HepG2 (cell line): ENCODE measurements at regions of chr19 and their contacts with region 1.

Region 1: GRCh38 chr19:41959056-41960053 is at the start of gene RABAC1:
- DNase-seq: peak; percentile 83
- ATAC-seq: peak; percentile 88
- H3K4me3 ChIP-seq: peak within 1 kb of the TSS; percentile 95 to 99 (median 98)
- H3K27ac ChIP-seq: peak within 1 kb of the TSS; percentile 73
- H3K4me1 ChIP-seq: peaks cover 32% of the 10 kb centered on the region
- H3K27me3 ChIP-seq: no peaks in the 10 kb centered on the region; a peak in 1 of 5 replicates
- CTCF ChIP-seq: peak; percentile 42
- EP300 ChIP-seq: 0 out of 4 replicates have a peak, but pooled peaks of 1 of the 2 experiments have one; percentile 36
- POLR2A ChIP-seq: peak; percentile 13 to 59; a peak in 3 of 4 replicates
- RAD21 ChIP-seq: no peak
- total RNA-seq, gene RABAC1: 20.7 and 37.4 TPM in 2 replicates

Region 2: DNA sequence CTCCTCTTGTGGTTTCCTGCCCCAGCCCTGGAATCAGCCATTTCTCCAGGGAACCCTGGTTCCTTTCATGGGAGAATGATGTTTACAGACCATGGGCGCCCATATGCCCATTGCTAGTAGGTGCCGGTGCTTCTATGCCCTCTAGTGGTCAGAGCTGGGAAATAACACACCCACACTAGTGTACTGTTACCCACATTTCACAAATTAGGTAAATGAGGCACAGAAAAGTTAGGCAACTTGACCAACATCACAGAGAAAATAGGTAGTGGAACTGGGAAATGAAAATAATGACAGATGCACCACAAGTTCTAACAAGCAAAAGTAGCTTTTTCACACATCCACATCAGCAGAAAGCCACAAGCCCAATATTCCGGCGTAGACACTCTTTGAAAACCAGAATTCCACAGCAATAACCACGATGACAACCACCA is 164.3 kb before region 1 on chr19:
- CTCF ChIA-PET with region 1: interaction called, 5 read pairs
- POLR2A ChIA-PET with region 1: no interaction called
- in situ Hi-C with region 1: no loop called
- intact Hi-C with region 1: loop called (anchors 10 kb)
- DNase-seq: peak; percentile 29
- ATAC-seq: peak; percentile 85
- H3K4me3 ChIP-seq: no peak overlapping the region
- H3K27ac ChIP-seq: no peak overlapping the region
- H3K4me1 ChIP-seq: peaks cover 10% of the 10 kb centered on the region
- H3K27me3 ChIP-seq: peaks cover 0 to 12% of the 10 kb centered on the region in 2 experiments; a peak in 2 of 5 replicates
- CTCF ChIP-seq: peak; percentile 60
- EP300 ChIP-seq: no peak
- POLR2A ChIP-seq: no peak
- RAD21 ChIP-seq: no peak

Region 3: DNA sequence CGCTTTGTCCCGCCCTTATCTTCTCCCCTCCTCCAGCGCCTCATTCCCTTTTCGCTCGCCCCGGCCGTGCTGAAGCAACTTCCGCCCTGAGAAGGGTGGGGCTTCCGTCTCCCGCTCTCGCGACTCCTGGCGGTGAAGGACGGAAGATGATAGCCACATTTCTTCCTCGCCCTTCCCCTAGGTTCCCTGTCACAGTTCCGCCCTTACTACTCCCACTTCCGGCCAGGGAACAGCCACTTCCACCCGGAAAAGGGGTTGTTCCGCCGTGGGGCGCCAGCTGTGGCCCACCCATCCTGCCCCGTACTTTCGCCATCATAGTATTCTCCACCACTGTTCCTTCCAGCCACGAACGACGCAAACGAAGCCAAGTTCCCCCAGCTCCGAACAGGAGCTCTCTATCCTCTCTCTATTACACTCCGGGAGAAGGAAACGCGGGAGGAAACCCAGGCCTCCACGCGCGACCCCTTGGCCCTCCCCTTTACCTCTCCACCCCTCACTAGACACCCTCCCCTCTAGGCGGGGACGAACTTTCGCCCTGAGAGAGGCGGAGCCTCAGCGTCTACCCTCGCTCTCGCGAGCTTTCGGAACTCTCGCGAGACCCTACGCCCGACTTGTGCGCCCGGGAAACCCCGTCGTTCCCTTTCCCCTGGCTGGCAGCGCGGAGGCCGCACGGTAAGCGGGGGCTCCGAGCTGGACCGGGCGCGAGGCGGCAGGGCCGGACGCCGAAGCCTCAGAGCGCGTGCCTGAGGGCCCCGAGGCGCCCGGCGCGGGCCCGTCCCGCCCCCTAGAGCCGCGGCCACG is 99.5 kb before region 1 on chr19 and contains the start of gene RPS19:
- CTCF ChIA-PET with region 1: no interaction called
- POLR2A ChIA-PET with region 1: interaction called, 36 read pairs
- in situ Hi-C with region 1: no loop called
- intact Hi-C with region 1: no loop called
- DNase-seq: peak; percentile 97
- ATAC-seq: peak; percentile 90
- H3K4me3 ChIP-seq: peak within 1 kb of the TSS; percentile 85 to 99 (median 95)
- H3K27ac ChIP-seq: peak within 1 kb of the TSS; percentile 84
- H3K4me1 ChIP-seq: peaks cover 44% of the 10 kb centered on the region
- H3K27me3 ChIP-seq: peaks cover 0 to 6% of the 10 kb centered on the region in 2 experiments; a peak in 2 of 5 replicates
- CTCF ChIP-seq: peak; percentile 82
- EP300 ChIP-seq: peak; percentile 24 to 28; a peak in 1 of 4 replicates
- POLR2A ChIP-seq: peak; percentile 80 to 92
- RAD21 ChIP-seq: no peak; the same call in none of the 2 replicates
- total RNA-seq, gene RPS19: 4,758 and 5,028 TPM in 2 replicates

Region 4: GRCh38 chr19:41934849-41935374 is 24.4 kb before region 1 on chr19:
- CTCF ChIA-PET with region 1: no interaction called
- POLR2A ChIA-PET with region 1: no interaction called
- in situ Hi-C with region 1: no loop called
- intact Hi-C with region 1: no loop called
- DNase-seq: peak; percentile 58
- ATAC-seq: peak; percentile 80
- H3K4me3 ChIP-seq: no peak overlapping the region
- H3K27ac ChIP-seq: no peak overlapping the region
- H3K4me1 ChIP-seq: no peaks in the 10 kb centered on the region
- H3K27me3 ChIP-seq: peaks cover 12 to 76% of the 10 kb centered on the region in 2 experiments; a peak in 4 of 5 replicates
- CTCF ChIP-seq: peak; percentile 89
- EP300 ChIP-seq: no peak
- POLR2A ChIP-seq: no peak
- RAD21 ChIP-seq: peak; percentile 59

Region 5: DNA sequence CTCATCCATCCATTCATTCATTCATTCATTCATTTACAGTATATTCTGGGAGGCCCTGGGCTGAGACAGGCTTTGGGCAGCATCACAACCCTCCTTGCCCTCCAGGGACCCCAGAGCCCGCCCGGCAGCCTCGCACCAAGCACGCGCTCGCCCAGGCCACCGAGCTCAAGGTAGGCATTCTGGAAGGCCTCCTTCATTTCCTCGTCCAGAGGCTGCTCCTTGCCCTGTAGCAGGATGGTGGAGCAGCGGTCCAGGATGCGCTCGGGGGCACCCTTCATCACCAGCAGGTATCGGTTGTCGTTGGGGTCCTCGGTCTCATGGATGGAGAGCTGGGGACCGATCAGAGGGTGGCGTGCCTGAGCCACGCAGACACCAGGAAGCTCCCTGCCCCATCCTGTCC is 19.1 kb after region 1 on chr19:
- CTCF ChIA-PET with region 1: no interaction called
- POLR2A ChIA-PET with region 1: no interaction called
- in situ Hi-C with region 1: no loop called
- intact Hi-C with region 1: no loop called
- DNase-seq: no peak
- ATAC-seq: no peak
- H3K4me3 ChIP-seq: no peak overlapping the region
- H3K27ac ChIP-seq: no peak overlapping the region
- H3K4me1 ChIP-seq: no peaks in the 10 kb centered on the region
- H3K27me3 ChIP-seq: peaks cover 1 to 20% of the 10 kb centered on the region in 2 experiments; a peak in 3 of 5 replicates
- CTCF ChIP-seq: no peak
- EP300 ChIP-seq: no peak
- POLR2A ChIP-seq: no peak
- RAD21 ChIP-seq: no peak